ENCODE measurements at regions of chr5 and their contacts with region 1.

Region 1: GRCh38 chr5:43926923-43927322 is 323.9 kb downstream of the NNT start:
- DNase-seq: no peak
- H3K4me3 ChIP-seq: no peak overlapping the region
- H3K27ac ChIP-seq: no peak overlapping the region
- H3K4me1 ChIP-seq: no peaks in the 10 kb centered on the region
- H3K27me3 ChIP-seq: no peaks in the 10 kb centered on the region
- CTCF ChIP-seq: no peak
- POLR2A ChIP-seq: no peak

Region 2: DNA sequence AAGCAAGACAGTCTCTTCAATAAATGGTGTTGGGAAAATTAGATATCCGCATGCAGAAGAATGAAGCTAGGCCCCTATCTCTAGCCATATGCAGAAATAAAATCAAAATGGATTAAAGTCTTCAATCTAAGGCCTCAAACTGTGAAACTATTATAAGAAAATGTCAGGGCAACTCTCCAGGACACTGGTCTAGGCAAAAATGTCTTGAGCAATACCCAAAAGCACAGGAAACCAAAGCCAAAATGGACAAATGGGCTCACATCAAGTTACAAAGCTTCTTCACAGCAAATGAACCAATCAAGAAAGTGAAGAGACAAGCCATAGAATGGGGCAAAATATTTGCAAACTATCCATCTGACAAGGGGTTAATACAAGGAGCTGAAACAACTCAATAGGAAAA is 14.9 kb after region 1 on chr5:
- intact Hi-C with region 1: loop called (anchors 2 kb)
- DNase-seq: no peak
- H3K4me3 ChIP-seq: no peak overlapping the region
- H3K27ac ChIP-seq: no peak overlapping the region
- H3K4me1 ChIP-seq: no peaks in the 10 kb centered on the region
- H3K27me3 ChIP-seq: no peaks in the 10 kb centered on the region
- CTCF ChIP-seq: no peak
- POLR2A ChIP-seq: no peak

Measured in breast epithelium (tissue), 4 donors.